Aorta (tissue), 5 donors: ENCODE measurements at regions of chr19 and their contacts with region 1.

Region 1: GRCh38 chr19:43503501-43504425 is 783 bp downstream of the PHLDB3 start:
- DNase-seq: peak; percentile 98 to 100
- ATAC-seq: peak; percentile 99
- H3K4me3 ChIP-seq: peak overlapping the region; percentile 53 to 84
- H3K27ac ChIP-seq: peak overlapping the region in 1 of 2 donors; percentile 69
- H3K4me1 ChIP-seq: no peaks in the 10 kb centered on the region
- H3K27me3 ChIP-seq: no peaks in the 10 kb centered on the region

Region 2: DNA sequence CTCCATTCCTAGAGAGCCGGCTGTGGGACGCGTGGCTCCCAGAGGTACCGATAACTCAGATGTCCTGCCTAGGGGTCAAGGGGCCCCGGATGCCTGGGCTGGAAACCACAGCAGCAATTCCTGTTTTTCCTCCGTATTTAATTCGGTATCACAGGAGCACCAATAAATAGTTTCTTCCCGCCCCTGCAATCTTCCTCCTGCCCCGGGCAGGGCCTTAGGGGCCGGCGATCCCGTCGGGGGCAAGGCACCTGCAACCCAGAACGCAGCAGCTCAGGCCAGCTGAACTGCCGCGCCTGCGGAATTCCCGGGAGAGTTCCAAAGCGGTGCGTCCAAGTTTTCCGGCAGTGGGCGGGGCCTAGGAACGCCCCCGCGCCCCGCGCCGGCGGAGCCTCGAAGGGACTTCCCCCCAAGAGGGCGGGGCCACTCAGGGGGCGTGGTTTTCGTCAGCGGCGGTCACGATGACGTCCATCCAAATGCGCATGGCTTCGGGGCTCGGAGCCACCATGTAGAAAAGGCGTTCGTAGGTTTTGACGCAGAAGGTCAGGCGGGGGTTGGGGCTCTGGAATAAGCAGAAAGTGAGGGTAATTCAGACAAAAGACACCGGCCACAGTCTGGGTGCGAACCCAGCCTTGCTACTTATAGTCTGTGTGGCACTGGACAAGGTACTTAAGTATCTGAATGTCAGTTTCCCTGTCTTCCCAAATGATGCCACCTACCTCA is 28.6 kb before region 1 on chr19:
- intact Hi-C with region 1: loop called in 1 of 2 experiments (anchors 2 kb)
- DNase-seq: peak; percentile 97 to 99
- ATAC-seq: peak; percentile 95
- H3K4me3 ChIP-seq: no peak overlapping the region
- H3K27ac ChIP-seq: peak overlapping the region in 1 of 2 donors; percentile 11
- H3K4me1 ChIP-seq: no peaks in the 10 kb centered on the region
- H3K27me3 ChIP-seq: no peaks in the 10 kb centered on the region